Sigmoid colon (tissue), 7 donors: ENCODE measurements at regions of chr2 and their contacts with region 1.

Region 1: GRCh38 chr2:67169417-67170140 is 227.6 kb upstream of the ETAA1 start:
- DNase-seq: no peak
- H3K4me3 ChIP-seq: no peak overlapping the region
- H3K27ac ChIP-seq: no peak overlapping the region
- H3K4me1 ChIP-seq: no peaks in the 10 kb centered on the region
- H3K27me3 ChIP-seq: no peaks in the 10 kb centered on the region
- CTCF ChIP-seq: no peak
- EP300 ChIP-seq: no peak
- POLR2A ChIP-seq: no peak

Region 2: GRCh38 chr2:67083951-67084350 is 85.6 kb before region 1 on chr2:
- intact Hi-C with region 1: no loop called
- DNase-seq: no peak
- H3K4me3 ChIP-seq: no peak overlapping the region
- H3K27ac ChIP-seq: peak overlapping the region in 3 of 4 donors; percentile 54 to 79 (median 77)
- H3K4me1 ChIP-seq: peaks cover 0 to 57% (median 37%) of the 10 kb centered on the region in 4 donors
- H3K27me3 ChIP-seq: no peaks in the 10 kb centered on the region
- CTCF ChIP-seq: no peak
- EP300 ChIP-seq: peak in 3 of 4 donors; percentile 36 to 72 (median 69)
- POLR2A ChIP-seq: no peak

Region 3: GRCh38 chr2:67156796-67157195 is 12.8 kb before region 1 on chr2:
- intact Hi-C with region 1: loop called (anchors 1 kb)
- DNase-seq: no peak
- H3K4me3 ChIP-seq: no peak overlapping the region
- H3K27ac ChIP-seq: no peak overlapping the region
- H3K4me1 ChIP-seq: peaks cover 0 to 28% (median 15%) of the 10 kb centered on the region in 4 donors
- H3K27me3 ChIP-seq: no peaks in the 10 kb centered on the region
- CTCF ChIP-seq: no peak
- EP300 ChIP-seq: no peak
- POLR2A ChIP-seq: no peak

Region 4: GRCh38 chr2:67201521-67201920 is 31.9 kb after region 1 on chr2:
- intact Hi-C with region 1: loop called (anchors 5 kb)
- DNase-seq: no peak
- H3K4me3 ChIP-seq: no peak overlapping the region
- H3K27ac ChIP-seq: no peak overlapping the region
- H3K4me1 ChIP-seq: no peaks in the 10 kb centered on the region
- H3K27me3 ChIP-seq: no peaks in the 10 kb centered on the region
- CTCF ChIP-seq: no peak
- EP300 ChIP-seq: no peak
- POLR2A ChIP-seq: no peak

Region 5: DNA sequence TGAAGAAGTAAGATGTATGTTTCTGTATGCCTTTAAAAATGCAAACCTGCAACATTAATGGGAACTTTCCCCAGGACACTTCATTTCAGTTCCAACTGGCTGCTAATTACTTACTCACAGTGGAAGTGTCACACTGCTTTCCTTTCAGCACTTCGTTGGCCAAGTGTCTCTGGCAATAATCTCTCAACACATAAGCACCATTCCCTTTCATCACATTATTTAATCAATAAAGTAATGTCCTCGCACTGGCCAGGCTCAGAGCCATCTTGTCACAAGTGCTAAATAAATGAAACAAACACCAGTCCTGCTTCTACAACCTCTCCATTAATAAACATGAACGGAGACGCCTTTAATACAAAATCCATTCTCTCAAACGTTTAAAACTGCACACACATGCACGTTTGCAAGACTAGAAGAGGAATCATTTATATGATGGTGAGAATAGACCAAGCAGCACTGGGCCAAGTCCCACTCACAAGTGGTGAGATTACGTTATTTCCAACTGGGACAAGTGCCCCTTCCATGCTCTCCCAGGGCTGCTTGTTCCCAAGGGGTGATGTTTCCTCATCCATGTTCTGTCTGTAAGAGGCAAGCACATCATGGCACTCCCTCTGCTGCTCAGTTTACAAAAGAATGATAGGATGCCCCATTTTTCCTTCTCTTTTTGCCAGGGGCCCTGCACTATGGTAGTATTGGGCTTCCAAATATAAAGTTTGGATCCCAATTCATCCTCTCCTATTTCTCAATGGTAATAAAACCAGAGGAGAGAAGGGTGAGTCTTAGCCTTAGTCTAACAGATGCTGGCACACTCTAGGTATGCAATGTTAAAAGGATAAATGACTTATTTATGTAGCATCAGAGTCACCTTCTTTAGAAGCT is 170.8 kb after region 1 on chr2:
- intact Hi-C with region 1: no loop called
- DNase-seq: no peak
- H3K4me3 ChIP-seq: no peak overlapping the region
- H3K27ac ChIP-seq: no peak overlapping the region
- H3K4me1 ChIP-seq: no peaks in the 10 kb centered on the region
- H3K27me3 ChIP-seq: no peaks in the 10 kb centered on the region
- CTCF ChIP-seq: no peak
- EP300 ChIP-seq: no peak
- POLR2A ChIP-seq: no peak

Region 6: DNA sequence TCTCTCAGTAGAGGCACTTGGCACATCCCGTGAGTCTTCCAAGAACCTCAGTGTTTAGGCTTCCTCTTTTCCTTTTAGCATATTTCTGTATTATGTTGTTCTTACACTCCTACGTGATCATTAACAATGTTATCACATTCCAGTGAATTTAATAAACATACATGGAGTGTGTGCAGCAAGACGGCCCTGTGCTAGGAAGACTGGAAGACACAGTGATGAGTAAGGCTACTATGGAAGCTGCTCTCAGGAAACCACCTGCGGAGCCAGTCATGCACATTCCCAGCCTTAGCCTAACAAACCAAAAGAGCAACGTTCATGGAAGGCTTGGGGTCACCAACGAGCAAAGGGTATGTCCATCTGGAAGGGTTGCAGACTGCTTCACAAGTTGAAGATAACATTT is 331.0 kb after region 1 on chr2:
- intact Hi-C with region 1: no loop called
- DNase-seq: no peak
- H3K4me3 ChIP-seq: no peak overlapping the region
- H3K27ac ChIP-seq: no peak overlapping the region
- H3K4me1 ChIP-seq: peaks cover 0 to 18% (median 5%) of the 10 kb centered on the region in 4 donors
- H3K27me3 ChIP-seq: no peaks in the 10 kb centered on the region
- CTCF ChIP-seq: no peak
- EP300 ChIP-seq: no peak
- POLR2A ChIP-seq: no peak